H1 (cell line): ENCODE measurements at regions of chr1 and their contacts with region 1.

Region 1: DNA sequence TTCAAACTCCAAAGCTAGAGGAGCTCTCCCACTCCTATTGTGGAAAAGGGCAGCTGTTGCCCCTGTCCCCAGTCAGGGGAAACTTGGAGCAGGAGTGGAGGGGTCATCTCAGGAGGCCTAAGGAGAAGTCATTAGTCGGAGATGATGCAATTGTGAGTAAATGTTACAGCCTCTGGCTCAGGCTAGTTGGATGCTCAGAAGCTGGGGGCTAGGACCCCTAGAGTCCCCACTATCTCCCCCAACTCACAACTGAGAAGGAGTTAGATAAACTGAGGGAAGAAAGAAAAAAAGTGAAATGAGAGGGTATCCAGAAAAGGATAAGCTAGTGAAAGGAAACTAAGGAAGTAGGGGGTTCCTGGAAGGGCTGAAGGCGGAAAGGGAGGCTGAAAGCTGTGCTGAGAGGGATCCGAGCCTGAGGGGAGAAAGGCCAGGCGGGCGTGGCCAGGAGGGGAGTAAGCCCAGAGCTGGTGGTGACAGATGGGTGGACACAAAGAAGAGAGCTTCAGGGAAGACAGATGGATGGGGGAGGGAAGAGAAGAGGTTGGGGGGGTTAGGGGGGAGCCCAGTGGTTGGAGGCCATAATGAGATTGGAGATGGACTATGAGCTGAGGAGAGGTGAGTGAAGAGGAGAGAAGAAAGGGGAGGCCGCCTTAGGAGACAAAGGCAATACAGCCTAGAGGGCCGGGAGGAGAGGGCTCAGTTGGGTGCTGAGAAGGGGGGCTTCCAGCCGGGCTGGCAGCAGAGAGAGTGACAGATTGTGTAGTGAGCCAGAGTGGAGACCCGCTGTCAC is 4.5 kb upstream of the NHLH1 start:
- DNase-seq: no peak
- H3K4me3 ChIP-seq: no peak overlapping the region
- H3K27ac ChIP-seq: peak overlapping the region; percentile 8; the same call in 1 of the 2 replicates
- H3K4me1 ChIP-seq: peaks cover 3 to 8% (median 4%) of the 10 kb centered on the region in 4 experiments; a peak in 6 of 7 replicates
- H3K27me3 ChIP-seq: no peaks in the 10 kb centered on the region
- CTCF ChIP-seq: no peak
- EP300 ChIP-seq: no peak
- POLR2A ChIP-seq: no peak
- RAD21 ChIP-seq: no peak

Region 2: GRCh38 chr1:160342953-160343869 is 19.2 kb before region 1 on chr1 and contains the starts of genes COPA and NCSTN:
- CTCF ChIA-PET with region 1: interaction called, 3 read pairs
- POLR2A ChIA-PET with region 1: interaction called, 12 read pairs
- DNase-seq: peak; percentile 71 to 90
- H3K4me3 ChIP-seq: peak within 1 kb of the TSS; percentile 88 to 98 (median 94)
- H3K27ac ChIP-seq: peak within 1 kb of the TSS; percentile 88
- H3K4me1 ChIP-seq: no peaks in the 10 kb centered on the region; a peak in 1 of 7 replicates
- H3K27me3 ChIP-seq: no peaks in the 10 kb centered on the region
- CTCF ChIP-seq: no peak
- EP300 ChIP-seq: no peak
- POLR2A ChIP-seq: peak; percentile 86 to 95
- RAD21 ChIP-seq: no peak
- total RNA-seq, gene COPA: 115 TPM in 2 replicates
- total RNA-seq, gene NCSTN: 64.7 and 70.1 TPM in 2 replicates